CD8-positive, alpha-beta T cell (primary cell): ENCODE measurements at regions of chr11 and their contacts with region 1.

Region 1: DNA sequence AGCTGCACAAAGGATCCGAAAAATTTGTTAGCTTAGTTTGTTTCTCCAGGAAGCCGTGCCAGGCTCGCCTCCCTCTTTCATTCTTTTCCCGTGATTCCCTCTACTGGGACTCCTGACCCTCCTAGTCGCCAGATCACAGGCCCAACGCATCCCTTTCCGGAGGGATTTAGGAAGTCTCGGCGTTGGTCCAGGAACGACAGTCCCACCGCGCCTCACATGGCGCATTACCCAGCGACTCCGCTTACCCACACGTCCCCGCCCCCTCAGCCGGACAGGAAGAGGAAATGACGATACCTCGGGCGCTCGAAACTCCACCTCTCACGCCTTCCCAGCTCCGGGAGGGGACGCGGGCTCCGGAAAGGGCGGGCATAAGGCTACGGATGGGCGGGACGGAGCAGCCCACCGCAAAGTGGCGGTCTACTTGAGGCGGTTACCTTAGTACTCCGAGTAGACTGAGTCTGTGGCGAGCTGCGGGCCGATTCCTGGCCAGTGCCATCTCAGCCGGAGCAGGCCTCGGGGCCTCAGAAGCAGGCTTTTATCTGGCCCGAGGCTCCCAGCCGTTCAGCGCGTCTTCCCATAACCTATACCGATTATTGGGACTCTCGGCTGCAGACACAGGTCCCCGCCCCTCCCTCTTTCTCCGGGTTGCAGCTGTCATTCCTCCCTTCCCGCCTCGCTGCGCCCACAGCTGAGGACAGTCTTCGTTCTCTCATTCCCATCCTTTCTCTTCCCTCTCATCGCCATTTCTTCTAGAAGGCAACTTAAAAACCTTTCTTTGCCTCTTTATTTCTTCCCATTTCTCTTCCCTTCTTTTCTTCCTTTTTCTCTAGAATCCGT is at the start of gene CCDC15:
- DNase-seq: peak; percentile 84 to 98 (median 95)
- ATAC-seq: peak; percentile 97
- H3K4me3 ChIP-seq: peak within 1 kb of the TSS; percentile 58 to 86
- H3K4me3 Mint-ChIP-seq: no peak within 1 kb of the TSS
- H3K27ac ChIP-seq: peak within 1 kb of the TSS; percentile 76 to 93
- H3K27ac Mint-ChIP-seq: no peak within 1 kb of the TSS
- H3K4me1 ChIP-seq: peaks cover 50% of the 10 kb centered on the region
- H3K4me1 Mint-ChIP-seq: peaks cover 2% of the 10 kb centered on the region
- H3K27me3 ChIP-seq: no peaks in the 10 kb centered on the region
- H3K27me3 Mint-ChIP-seq: no peaks in the 10 kb centered on the region
- CTCF ChIP-seq: no peak
- total RNA-seq, gene CCDC15: 0.56 to 0.57 TPM

Region 2: GRCh38 chr11:124622531-124623451 is 331.2 kb before region 1 on chr11 and contains the start of gene TBRG1:
- CTCF ChIA-PET with region 1: no interaction called
- POLR2A ChIA-PET with region 1: no interaction called
- intact Hi-C with region 1: loop called (anchors 2 to 5 kb)
- DNase-seq: peak; percentile 62 to 95 (median 84)
- ATAC-seq: peak; percentile 97
- H3K4me3 ChIP-seq: peak within 1 kb of the TSS; percentile 94 to 100
- H3K4me3 Mint-ChIP-seq: peak within 1 kb of the TSS; percentile 97
- H3K27ac ChIP-seq: peak within 1 kb of the TSS; percentile 95 to 97
- H3K27ac Mint-ChIP-seq: peak within 1 kb of the TSS; percentile 99
- H3K4me1 ChIP-seq: peaks cover 16% of the 10 kb centered on the region
- H3K4me1 Mint-ChIP-seq: peaks cover 43% of the 10 kb centered on the region
- H3K27me3 ChIP-seq: no peaks in the 10 kb centered on the region
- H3K27me3 Mint-ChIP-seq: peaks cover 6% of the 10 kb centered on the region
- CTCF ChIP-seq: no peak
- total RNA-seq, gene TBRG1: 59.2 to 61.0 TPM

Region 3: GRCh38 chr11:124800226-124800929 is 153.6 kb before region 1 on chr11 and contains the start of gene MSANTD2:
- CTCF ChIA-PET with region 1: no interaction called
- POLR2A ChIA-PET with region 1: no interaction called
- intact Hi-C with region 1: loop called (anchors 1 to 5 kb)
- DNase-seq: peak; percentile 57 to 88 (median 80)
- ATAC-seq: peak; percentile 76
- H3K4me3 ChIP-seq: peak within 1 kb of the TSS; percentile 72 to 84
- H3K4me3 Mint-ChIP-seq: peak within 1 kb of the TSS; percentile 96
- H3K27ac ChIP-seq: peak within 1 kb of the TSS; percentile 91 to 98
- H3K27ac Mint-ChIP-seq: peak within 1 kb of the TSS; percentile 96
- H3K4me1 ChIP-seq: peaks cover 17% of the 10 kb centered on the region
- H3K4me1 Mint-ChIP-seq: peaks cover 32% of the 10 kb centered on the region
- H3K27me3 ChIP-seq: no peaks in the 10 kb centered on the region
- H3K27me3 Mint-ChIP-seq: no peaks in the 10 kb centered on the region
- CTCF ChIP-seq: no peak
- total RNA-seq, gene MSANTD2: 4.3 to 4.5 TPM

Region 4: GRCh38 chr11:124943254-124943616 is 10.7 kb before region 1 on chr11:
- CTCF ChIA-PET with region 1: interaction called, 4 read pairs
- POLR2A ChIA-PET with region 1: interaction called, 15 read pairs
- intact Hi-C with region 1: no loop called
- DNase-seq: no peak
- ATAC-seq: no peak
- H3K4me3 ChIP-seq: no peak overlapping the region
- H3K4me3 Mint-ChIP-seq: no peak overlapping the region
- H3K27ac ChIP-seq: peak overlapping the region in 1 of 2 experiments; percentile 6
- H3K27ac Mint-ChIP-seq: peak overlapping the region; percentile 70
- H3K4me1 ChIP-seq: peaks cover 22% of the 10 kb centered on the region
- H3K4me1 Mint-ChIP-seq: peaks cover 27% of the 10 kb centered on the region
- H3K27me3 ChIP-seq: no peaks in the 10 kb centered on the region
- H3K27me3 Mint-ChIP-seq: no peaks in the 10 kb centered on the region
- CTCF ChIP-seq: no peak

Region 5: DNA sequence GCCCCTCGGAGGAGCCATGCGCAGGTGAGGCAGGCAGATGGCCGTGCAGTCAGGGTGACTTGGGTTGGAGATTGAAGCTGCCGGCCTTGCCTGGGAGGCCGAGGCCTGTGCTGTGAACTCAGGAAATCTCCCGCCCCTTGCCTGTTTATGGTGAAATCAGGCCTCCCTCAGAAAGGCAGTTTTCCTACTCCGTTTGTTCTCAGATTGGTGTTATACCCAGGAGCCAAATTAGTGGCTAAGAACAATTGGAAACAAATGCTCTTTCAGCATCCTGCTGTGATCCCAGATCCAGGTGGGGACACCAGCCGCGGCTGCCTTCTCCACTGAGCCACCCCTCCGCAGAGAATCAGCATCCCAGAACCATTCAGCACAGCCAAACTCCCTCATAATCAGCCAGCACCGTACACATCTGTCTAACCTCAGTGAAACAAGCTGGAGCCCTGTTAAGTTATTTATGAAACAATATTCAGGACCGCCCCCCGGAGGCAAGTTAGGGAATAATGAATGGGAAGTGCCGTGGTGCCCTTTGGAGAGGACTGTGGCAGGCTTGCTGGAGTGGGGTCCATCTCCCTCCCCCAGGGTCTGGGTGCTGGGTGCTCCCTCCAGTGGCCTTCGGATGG is 270.5 kb after region 1 on chr11:
- CTCF ChIA-PET with region 1: no interaction called
- POLR2A ChIA-PET with region 1: no interaction called
- intact Hi-C with region 1: no loop called
- DNase-seq: no peak
- ATAC-seq: no peak
- H3K4me3 ChIP-seq: no peak overlapping the region
- H3K4me3 Mint-ChIP-seq: no peak overlapping the region
- H3K27ac ChIP-seq: no peak overlapping the region
- H3K27ac Mint-ChIP-seq: no peak overlapping the region
- H3K4me1 ChIP-seq: no peaks in the 10 kb centered on the region
- H3K4me1 Mint-ChIP-seq: no peaks in the 10 kb centered on the region
- H3K27me3 ChIP-seq: no peaks in the 10 kb centered on the region
- H3K27me3 Mint-ChIP-seq: peaks cover 9% of the 10 kb centered on the region
- CTCF ChIP-seq: no peak

Region 6: DNA sequence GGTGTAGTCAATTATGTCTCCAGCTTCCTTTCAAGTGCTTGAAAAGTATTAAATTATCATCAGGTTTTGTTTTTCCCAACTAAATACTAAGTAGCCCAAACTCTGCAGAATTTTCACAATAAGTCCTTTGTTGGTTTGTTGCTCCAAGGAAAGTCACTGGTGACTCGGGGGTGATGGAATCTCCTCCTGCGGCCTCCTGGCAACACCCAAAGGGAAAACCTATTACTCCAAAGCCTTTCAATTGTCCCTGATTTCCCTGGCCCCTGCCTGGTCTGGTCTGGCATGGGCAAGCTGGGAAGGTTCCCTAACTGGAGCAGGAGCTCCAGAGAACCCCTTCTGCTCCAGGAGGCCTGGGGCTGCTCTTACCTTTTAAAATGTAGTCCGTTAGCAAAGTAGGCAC is 494.2 kb after region 1 on chr11:
- CTCF ChIA-PET with region 1: no interaction called
- POLR2A ChIA-PET with region 1: no interaction called
- intact Hi-C with region 1: no loop called
- DNase-seq: no peak
- ATAC-seq: no peak
- H3K4me3 ChIP-seq: no peak overlapping the region
- H3K4me3 Mint-ChIP-seq: no peak overlapping the region
- H3K27ac ChIP-seq: no peak overlapping the region
- H3K27ac Mint-ChIP-seq: no peak overlapping the region
- H3K4me1 ChIP-seq: no peaks in the 10 kb centered on the region
- H3K4me1 Mint-ChIP-seq: peaks cover 4% of the 10 kb centered on the region
- H3K27me3 ChIP-seq: no peaks in the 10 kb centered on the region
- H3K27me3 Mint-ChIP-seq: peaks cover 8% of the 10 kb centered on the region
- CTCF ChIP-seq: no peak

Region 7: GRCh38 chr11:125887373-125888324 is 933.7 kb after region 1 on chr11 and contains the start of gene HYLS1:
- CTCF ChIA-PET with region 1: no interaction called
- POLR2A ChIA-PET with region 1: interaction called, 6 read pairs
- intact Hi-C with region 1: loop called in 1 of 2 experiments (anchors 5 kb)
- DNase-seq: peak; percentile 87 to 97 (median 94)
- ATAC-seq: peak; percentile 88
- H3K4me3 ChIP-seq: peak within 1 kb of the TSS; percentile 81 to 84
- H3K4me3 Mint-ChIP-seq: peak within 1 kb of the TSS; percentile 88
- H3K27ac ChIP-seq: peak within 1 kb of the TSS; percentile 61 to 87
- H3K27ac Mint-ChIP-seq: peak within 1 kb of the TSS; percentile 87
- H3K4me1 ChIP-seq: peaks cover 10% of the 10 kb centered on the region
- H3K4me1 Mint-ChIP-seq: peaks cover 31% of the 10 kb centered on the region
- H3K27me3 ChIP-seq: no peaks in the 10 kb centered on the region
- H3K27me3 Mint-ChIP-seq: no peaks in the 10 kb centered on the region
- CTCF ChIP-seq: no peak
- total RNA-seq, gene HYLS1: 1.1 to 1.2 TPM